GM10248 (cell line): ENCODE measurements at regions of chr5 and their contacts with region 1.

Region 1: GRCh38 chr5:132490486-132491367 is at the start of gene IRF1:
- DNase-seq: peak; percentile 98
- CTCF ChIP-seq: peak; percentile 6

Region 2: GRCh38 chr5:132283423-132284043 is 207.2 kb before region 1 on chr5:
- CTCF ChIA-PET with region 1: no interaction called
- POLR2A ChIA-PET with region 1: no interaction called
- DNase-seq: no peak
- CTCF ChIP-seq: no peak

Region 3: DNA sequence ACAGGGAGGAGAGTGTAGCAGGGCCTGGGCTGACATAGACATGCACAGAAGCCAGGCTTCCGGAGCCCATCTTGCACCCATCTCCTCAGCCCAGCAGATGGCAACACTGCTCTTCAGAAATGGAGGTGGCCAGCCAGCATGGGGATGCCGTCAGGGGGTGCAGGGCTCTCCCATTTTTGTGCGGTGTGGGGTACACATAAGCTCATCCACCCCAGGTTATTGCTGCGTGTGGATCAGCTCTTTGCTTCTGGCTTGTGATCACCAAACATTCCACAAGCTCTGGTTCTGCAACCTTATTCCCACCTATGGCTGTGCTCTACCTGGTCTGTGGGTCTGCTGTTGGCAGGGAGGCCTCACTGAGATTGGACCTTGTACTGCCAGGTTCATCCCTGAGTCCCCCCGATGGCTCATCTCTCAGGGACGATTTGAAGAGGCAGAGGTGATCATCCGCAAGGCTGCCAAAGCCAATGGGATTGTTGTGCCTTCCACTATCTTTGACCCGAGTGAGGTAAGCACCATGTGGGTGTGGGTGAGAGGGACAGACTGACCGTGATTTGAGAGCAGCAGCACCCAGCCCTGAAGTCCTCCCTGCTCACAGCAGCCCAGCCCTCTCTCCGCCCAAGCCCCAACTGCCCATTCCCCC is 104.0 kb before region 1 on chr5:
- CTCF ChIA-PET with region 1: interaction called, 255 read pairs
- POLR2A ChIA-PET with region 1: no interaction called
- DNase-seq: peak; percentile 87
- CTCF ChIP-seq: peak; percentile 89

Region 4: GRCh38 chr5:132419502-132420468 is 70.9 kb before region 1 on chr5:
- CTCF ChIA-PET with region 1: interaction called, 60 read pairs
- POLR2A ChIA-PET with region 1: interaction called, 59 read pairs
- DNase-seq: peak; percentile 73
- CTCF ChIP-seq: peak; percentile 86

Region 5: GRCh38 chr5:132456296-132457001 is 34.3 kb before region 1 on chr5:
- CTCF ChIA-PET with region 1: interaction called, 4 read pairs
- POLR2A ChIA-PET with region 1: interaction called, 15 read pairs
- DNase-seq: peak; percentile 42
- CTCF ChIP-seq: no peak

Region 6: GRCh38 chr5:132473019-132473531 is 17.7 kb before region 1 on chr5:
- CTCF ChIA-PET with region 1: interaction called, 62 read pairs
- POLR2A ChIA-PET with region 1: interaction called, 132 read pairs
- DNase-seq: peak; percentile 73
- CTCF ChIP-seq: no peak

Region 7: DNA sequence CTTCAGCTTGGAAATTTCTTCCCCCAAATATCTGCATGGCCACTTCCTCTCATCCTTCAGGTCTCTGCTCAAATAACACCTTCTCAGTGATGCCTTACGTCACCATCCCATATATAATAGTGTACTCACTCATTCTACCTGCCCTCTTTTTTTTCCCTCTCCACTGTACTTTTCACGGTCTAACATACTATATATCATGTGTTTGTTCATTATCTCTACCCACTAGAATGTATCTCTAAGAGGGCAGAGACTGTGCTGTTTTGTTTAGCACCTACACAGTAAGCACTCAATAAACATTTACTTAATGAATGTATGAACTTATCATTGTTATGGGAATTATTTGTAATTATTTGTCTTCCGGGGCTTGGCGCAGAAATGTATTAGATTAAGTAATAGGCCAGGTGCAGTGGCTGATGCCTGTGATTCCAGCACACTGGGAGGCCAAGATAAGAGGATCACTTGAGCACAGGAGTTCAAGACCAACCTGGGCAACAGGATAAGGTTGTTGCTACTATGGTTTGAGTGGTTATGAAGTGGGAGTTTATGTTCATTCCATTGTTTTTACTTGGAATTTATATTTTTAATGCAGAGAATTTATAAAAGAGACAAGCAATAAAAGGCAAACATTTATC is 161.2 kb after region 1 on chr5:
- CTCF ChIA-PET with region 1: no interaction called
- POLR2A ChIA-PET with region 1: no interaction called
- DNase-seq: no peak
- CTCF ChIP-seq: no peak

Region 8: GRCh38 chr5:133015466-133015865 is 524.7 kb after region 1 on chr5:
- CTCF ChIA-PET with region 1: no interaction called
- POLR2A ChIA-PET with region 1: no interaction called
- DNase-seq: no peak
- CTCF ChIP-seq: no peak